ENCODE measurements at regions of chr13 and their contacts with region 1.

Region 1: DNA sequence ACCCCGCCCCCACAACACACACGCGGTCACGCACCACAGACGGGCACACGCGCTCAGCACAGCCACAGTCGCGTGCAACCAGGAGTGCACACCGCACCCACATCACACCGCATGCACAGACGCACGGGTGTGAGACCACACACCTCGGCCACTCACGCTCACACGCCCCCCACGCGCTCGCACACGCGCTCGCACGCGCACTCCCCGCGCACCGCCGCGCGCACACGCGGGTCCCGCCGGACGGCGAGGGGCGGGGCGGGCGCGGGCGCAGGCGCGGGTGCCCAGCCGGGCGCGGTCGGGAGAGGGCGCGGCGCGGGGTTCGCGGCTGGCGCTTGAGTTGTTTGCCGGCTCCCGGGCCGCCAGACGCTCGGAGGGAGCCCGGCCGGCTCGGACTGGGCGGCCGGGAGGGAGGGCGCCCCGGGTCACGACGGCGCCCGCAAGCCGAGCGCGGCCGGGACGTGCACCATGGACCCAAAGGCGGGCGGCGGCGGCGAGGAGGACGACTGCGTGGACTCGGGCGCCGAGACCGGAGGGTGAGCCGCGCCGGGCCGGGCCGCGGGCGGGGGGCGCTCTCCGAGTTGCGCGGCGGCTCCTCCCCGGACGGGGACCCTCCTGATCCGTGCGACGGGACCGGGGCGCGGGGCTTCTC is at the start of gene FAM124A:
- DNase-seq: peak; percentile 30 to 73 (median 51)
- H3K4me3 ChIP-seq: peak within 1 kb of the TSS; percentile 48
- H3K27ac ChIP-seq: no peak within 1 kb of the TSS
- H3K4me1 ChIP-seq: peaks cover 5% of the 10 kb centered on the region
- H3K27me3 ChIP-seq: no peaks in the 10 kb centered on the region
- CTCF ChIP-seq: peak in 2 of 3 donors; percentile 26 to 36
- EP300 ChIP-seq: no peak
- POLR2A ChIP-seq: no peak
- total RNA-seq, gene FAM124A: 0.48 to 8.8 (median 1.9) TPM

Region 2: DNA sequence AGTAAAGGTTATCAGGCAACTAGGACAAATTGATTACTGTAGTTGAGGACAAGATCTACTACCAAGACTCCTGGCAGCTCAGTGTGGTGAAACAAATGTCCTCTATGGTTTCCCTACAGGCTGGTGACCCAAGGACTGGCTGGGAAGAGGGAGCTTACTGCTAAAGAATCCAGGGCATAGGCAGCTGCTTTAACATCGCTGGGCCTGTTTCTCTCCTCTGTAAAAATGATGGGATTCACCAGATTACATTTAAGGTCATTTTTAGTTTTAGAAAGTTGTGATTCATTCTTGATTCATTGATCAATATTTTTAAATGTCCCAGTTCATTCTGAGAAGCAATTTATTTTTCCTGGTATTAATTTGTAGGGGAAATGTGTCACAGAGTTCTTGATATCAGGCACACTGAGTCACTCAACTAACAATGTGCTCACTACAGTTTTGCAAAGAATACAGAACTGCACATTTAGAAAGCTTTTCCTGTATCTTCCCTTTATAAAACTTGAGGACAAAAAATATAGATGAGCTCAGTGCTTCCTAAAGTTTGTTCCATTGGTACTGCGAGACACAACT is 19.6 kb before region 1 on chr13:
- intact Hi-C with region 1: no loop called
- DNase-seq: no peak
- H3K4me3 ChIP-seq: no peak overlapping the region
- H3K27ac ChIP-seq: no peak overlapping the region
- H3K4me1 ChIP-seq: no peaks in the 10 kb centered on the region
- H3K27me3 ChIP-seq: no peaks in the 10 kb centered on the region
- CTCF ChIP-seq: no peak
- EP300 ChIP-seq: no peak
- POLR2A ChIP-seq: no peak

Region 3: GRCh38 chr13:51271528-51272085 is 49.4 kb after region 1 on chr13:
- intact Hi-C with region 1: loop called in 1 of 4 experiments (anchors 10 kb)
- DNase-seq: no peak
- H3K4me3 ChIP-seq: no peak overlapping the region
- H3K27ac ChIP-seq: no peak overlapping the region
- H3K4me1 ChIP-seq: peaks cover 3% of the 10 kb centered on the region
- H3K27me3 ChIP-seq: no peaks in the 10 kb centered on the region
- CTCF ChIP-seq: no peak
- EP300 ChIP-seq: no peak
- POLR2A ChIP-seq: no peak

Region 4: DNA sequence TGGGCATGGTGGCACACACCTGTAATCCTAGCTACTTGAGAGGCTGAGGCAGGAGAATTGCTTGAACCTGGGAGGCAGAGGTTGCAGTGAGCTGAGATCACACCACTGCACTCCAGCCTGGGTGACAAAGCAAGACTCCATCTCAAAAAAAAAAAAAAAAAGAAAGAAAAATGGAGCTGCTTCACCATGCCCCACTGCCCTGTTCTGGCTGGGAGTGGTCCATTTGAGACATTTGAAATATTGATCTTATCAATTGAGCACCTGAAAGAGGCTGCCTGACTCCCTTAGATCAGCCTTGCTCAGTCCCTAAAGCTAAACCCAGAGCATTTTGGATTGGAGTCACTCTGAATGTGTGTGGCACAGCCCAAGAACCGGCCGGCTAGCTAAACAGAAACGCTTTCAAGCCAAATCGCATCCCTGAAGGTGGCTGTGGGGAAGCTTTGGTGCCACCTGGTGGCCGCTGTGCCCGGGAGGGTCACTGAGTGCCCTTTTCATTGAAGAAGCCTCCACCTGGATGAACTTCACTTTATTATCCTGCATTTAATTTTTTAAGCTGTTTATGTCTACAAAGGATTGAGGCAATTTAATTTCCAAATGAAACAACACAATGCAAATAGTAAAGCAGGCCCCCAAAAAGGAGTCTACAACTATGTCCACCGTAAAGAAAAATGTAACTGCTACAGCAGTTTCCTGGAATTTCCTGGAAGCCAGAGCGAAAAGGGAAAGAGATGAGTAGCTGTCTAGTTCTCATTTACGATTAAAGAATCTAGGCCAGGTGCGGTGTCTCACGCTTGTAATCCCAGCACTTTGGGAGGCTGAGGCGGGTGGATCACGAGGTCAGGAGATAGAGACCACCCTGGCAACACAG is 64.2 kb after region 1 on chr13:
- intact Hi-C with region 1: loop called in 2 of 4 experiments (anchors 2 to 10 kb)
- DNase-seq: peak; percentile 62 to 84 (median 68)
- H3K4me3 ChIP-seq: no peak overlapping the region
- H3K27ac ChIP-seq: no peak overlapping the region
- H3K4me1 ChIP-seq: peaks cover 3% of the 10 kb centered on the region
- H3K27me3 ChIP-seq: no peaks in the 10 kb centered on the region
- CTCF ChIP-seq: peak; percentile 42 to 66 (median 43)
- EP300 ChIP-seq: no peak
- POLR2A ChIP-seq: no peak

Region 5: GRCh38 chr13:51317262-51317661 is 95.1 kb after region 1 on chr13:
- intact Hi-C with region 1: no loop called
- DNase-seq: no peak
- H3K4me3 ChIP-seq: no peak overlapping the region
- H3K27ac ChIP-seq: no peak overlapping the region
- H3K4me1 ChIP-seq: peaks cover 2% of the 10 kb centered on the region
- H3K27me3 ChIP-seq: no peaks in the 10 kb centered on the region
- CTCF ChIP-seq: no peak
- EP300 ChIP-seq: no peak
- POLR2A ChIP-seq: no peak

Region 6: GRCh38 chr13:51967482-51968446 is 745.6 kb after region 1 on chr13:
- intact Hi-C with region 1: loop called in 1 of 4 experiments (anchors 5 kb)
- DNase-seq: no peak
- H3K4me3 ChIP-seq: no peak overlapping the region
- H3K27ac ChIP-seq: no peak overlapping the region
- H3K4me1 ChIP-seq: no peaks in the 10 kb centered on the region
- H3K27me3 ChIP-seq: no peaks in the 10 kb centered on the region
- CTCF ChIP-seq: no peak
- EP300 ChIP-seq: no peak
- POLR2A ChIP-seq: no peak